ENCODE measurements at regions of chr15 and their contacts with region 1.

Region 1: DNA sequence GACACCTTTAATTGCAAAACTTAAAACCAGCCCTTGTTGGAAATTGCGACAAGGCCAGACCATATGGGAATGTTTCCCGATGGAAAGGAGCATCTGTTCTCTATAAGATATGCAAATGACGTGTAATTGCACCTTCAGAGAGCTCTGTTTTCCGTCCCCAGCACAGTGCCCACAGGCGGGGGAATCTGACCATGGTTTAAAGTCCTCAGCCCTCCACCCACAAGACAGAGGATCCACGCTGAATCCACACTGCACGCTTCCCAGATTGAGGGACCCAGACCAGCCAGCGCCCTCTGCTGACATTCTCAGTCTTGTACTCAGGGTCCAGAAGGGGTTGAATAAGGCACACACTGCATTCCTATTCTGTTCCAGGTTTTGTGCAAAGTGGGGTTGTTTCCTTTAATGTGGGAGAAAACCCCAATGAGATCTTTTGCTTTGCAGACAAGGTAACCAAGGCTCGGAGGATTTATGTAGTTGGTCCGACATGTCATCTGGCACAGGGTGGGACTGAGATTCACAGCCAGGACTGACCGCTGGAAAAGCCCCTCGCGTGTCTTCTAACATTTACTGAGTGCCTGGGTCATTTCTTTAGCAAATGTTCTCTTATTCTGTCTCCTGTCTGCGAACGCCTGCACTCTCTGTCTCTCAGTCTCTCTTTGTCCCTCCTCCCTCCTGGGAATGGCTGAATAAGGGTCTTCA is 36.8 kb upstream of the KLHL25 start:
- DNase-seq: peak in 3 of 4 donors; percentile 44 to 69 (median 52)
- ATAC-seq: peak; percentile 88
- H3K4me3 ChIP-seq: no peak overlapping the region
- H3K27ac ChIP-seq: no peak overlapping the region
- H3K4me1 ChIP-seq: no peaks in the 10 kb centered on the region
- H3K27me3 ChIP-seq: no peaks in the 10 kb centered on the region
- CTCF ChIP-seq: peak in 1 of 2 donors; percentile 39

Region 2: GRCh38 chr15:85742186-85742821 is 89.3 kb before region 1 on chr15:
- intact Hi-C with region 1: loop called in 1 of 2 experiments (anchors 10 kb)
- DNase-seq: no peak
- ATAC-seq: peak; percentile 17
- H3K4me3 ChIP-seq: no peak overlapping the region
- H3K27ac ChIP-seq: no peak overlapping the region
- H3K4me1 ChIP-seq: peaks cover 0 to 2% of the 10 kb centered on the region in 2 donors
- H3K27me3 ChIP-seq: no peaks in the 10 kb centered on the region
- CTCF ChIP-seq: no peak

Measured in left lung (tissue), 14 donors.